HCT116 (cell line): ENCODE measurements at regions of chr10 and their contacts with region 1.

Region 1: GRCh38 chr10:118720685-118721538 is 33.9 kb downstream of the CACUL1 start:
- DNase-seq: peak; percentile 50
- ATAC-seq: peak; percentile 79
- H3K4me3 ChIP-seq: no peak overlapping the region
- H3K27ac ChIP-seq: no peak overlapping the region
- H3K4me1 ChIP-seq: no peaks in the 10 kb centered on the region
- H3K27me3 ChIP-seq: no peaks in the 10 kb centered on the region
- CTCF ChIP-seq: peak; percentile 79 to 98 (median 86)
- POLR2A ChIP-seq: no peak
- RAD21 ChIP-seq: peak; percentile 85

Region 2: GRCh38 chr10:118511711-118512110 is 209.2 kb before region 1 on chr10:
- CTCF ChIA-PET with region 1: no interaction called
- POLR2A ChIA-PET with region 1: no interaction called
- RAD21 ChIA-PET with region 1: no interaction called
- intact Hi-C with region 1: no loop called
- DNase-seq: no peak
- ATAC-seq: no peak
- H3K4me3 ChIP-seq: no peak overlapping the region
- H3K27ac ChIP-seq: no peak overlapping the region
- H3K4me1 ChIP-seq: no peaks in the 10 kb centered on the region
- H3K27me3 ChIP-seq: no peaks in the 10 kb centered on the region
- CTCF ChIP-seq: no peak
- POLR2A ChIP-seq: no peak
- RAD21 ChIP-seq: no peak

Region 3: DNA sequence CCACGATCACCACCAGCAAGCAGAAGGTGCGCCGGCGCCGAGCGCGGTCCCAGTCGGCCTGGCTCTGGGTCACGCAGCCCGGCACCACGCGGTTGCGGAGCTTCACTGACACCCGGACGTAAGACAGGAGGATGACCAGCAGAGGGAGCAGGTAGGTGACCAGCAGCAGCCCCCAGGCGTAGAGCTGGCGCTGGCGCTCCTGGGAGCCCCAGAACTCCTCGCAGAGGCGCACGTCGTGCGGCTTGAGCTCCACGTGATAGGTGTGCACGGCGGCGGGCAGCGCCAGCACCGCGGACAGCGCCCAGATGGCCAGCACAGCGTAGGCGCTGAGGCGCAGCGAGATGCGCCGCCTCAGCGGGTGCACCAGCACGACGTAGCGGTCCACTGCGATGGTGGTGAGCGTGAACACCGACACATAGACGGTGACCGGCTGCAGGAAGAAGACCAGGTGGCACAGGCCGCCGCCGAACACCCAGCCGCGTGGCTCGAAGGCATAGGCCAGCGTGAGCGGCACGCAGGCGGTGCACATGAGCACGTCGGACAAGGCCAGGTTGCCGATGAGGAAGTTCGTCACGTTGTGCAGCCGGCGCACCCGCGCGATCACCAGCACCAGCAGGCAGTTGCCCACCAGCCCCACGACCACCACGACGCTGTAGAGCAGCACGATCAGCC is 126.4 kb before region 1 on chr10:
- CTCF ChIA-PET with region 1: interaction called, 21 read pairs
- POLR2A ChIA-PET with region 1: no interaction called
- RAD21 ChIA-PET with region 1: no interaction called
- intact Hi-C with region 1: loop called (anchors 1 kb)
- DNase-seq: no peak
- ATAC-seq: peak; percentile 81
- H3K4me3 ChIP-seq: no peak overlapping the region
- H3K27ac ChIP-seq: no peak overlapping the region
- H3K4me1 ChIP-seq: no peaks in the 10 kb centered on the region
- H3K27me3 ChIP-seq: peaks cover 56% of the 10 kb centered on the region
- CTCF ChIP-seq: peak; percentile 32 to 60 (median 59); a peak in 5 of 6 replicates
- POLR2A ChIP-seq: no peak
- RAD21 ChIP-seq: peak; percentile 48

Region 4: DNA sequence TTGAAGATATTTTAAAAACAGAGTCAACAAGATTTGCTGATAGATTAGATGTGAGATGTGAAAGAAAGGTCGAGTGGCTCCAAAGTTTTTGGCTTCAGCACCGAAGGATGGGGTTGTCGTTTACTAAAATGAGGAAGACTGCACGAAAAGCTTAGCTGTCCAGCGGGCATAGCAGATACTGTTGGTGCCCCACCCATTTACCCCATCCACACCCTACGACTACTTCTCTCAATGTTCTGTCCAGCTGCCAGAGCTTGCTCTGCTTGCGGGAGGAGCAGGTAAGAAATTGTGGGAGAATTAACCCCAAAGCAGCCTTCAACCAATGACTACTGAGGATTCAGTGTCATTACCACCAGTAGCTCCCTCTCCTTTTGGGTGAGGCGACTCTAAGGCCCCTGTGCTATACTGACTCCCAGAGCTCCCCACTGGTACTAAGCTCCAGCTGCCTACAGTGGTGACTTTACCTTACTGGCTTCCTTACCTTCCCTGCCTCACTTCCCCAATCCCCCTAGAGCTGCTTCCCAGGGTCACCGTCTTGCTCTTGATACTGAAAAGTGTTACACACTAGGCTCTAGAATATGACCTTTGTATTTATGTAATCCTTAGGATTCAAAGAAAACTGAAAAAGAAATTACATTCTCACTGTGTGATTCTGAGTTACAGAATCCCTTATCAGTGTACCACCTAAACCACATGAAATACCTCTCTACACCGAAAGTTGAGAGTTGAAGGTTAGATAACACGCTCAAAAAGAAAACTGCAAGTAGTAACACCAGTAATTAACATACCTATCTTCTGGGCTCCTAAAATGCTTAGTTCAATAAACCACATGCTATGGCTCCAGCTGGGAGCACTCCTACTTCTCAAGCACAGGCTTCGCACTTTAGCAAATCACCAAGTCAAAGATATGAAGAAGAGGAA is 11.6 kb after region 1 on chr10:
- CTCF ChIA-PET with region 1: interaction called, 35 read pairs
- POLR2A ChIA-PET with region 1: no interaction called
- RAD21 ChIA-PET with region 1: no interaction called
- intact Hi-C with region 1: no loop called
- DNase-seq: no peak
- ATAC-seq: no peak
- H3K4me3 ChIP-seq: no peak overlapping the region
- H3K27ac ChIP-seq: no peak overlapping the region
- H3K4me1 ChIP-seq: no peaks in the 10 kb centered on the region
- H3K27me3 ChIP-seq: no peaks in the 10 kb centered on the region
- CTCF ChIP-seq: no peak
- POLR2A ChIP-seq: no peak
- RAD21 ChIP-seq: no peak

Region 5: GRCh38 chr10:118754720-118755480 is 34.0 kb after region 1 on chr10 and contains the start of gene CACUL1:
- CTCF ChIA-PET with region 1: interaction called, 17 read pairs
- POLR2A ChIA-PET with region 1: no interaction called
- RAD21 ChIA-PET with region 1: no interaction called
- intact Hi-C with region 1: no loop called
- DNase-seq: peak; percentile 100
- ATAC-seq: peak; percentile 97
- H3K4me3 ChIP-seq: peak within 1 kb of the TSS; percentile 81 to 94
- H3K27ac ChIP-seq: peak within 1 kb of the TSS; percentile 83
- H3K4me1 ChIP-seq: peaks cover 10 to 21% of the 10 kb centered on the region in 2 experiments
- H3K27me3 ChIP-seq: no peaks in the 10 kb centered on the region
- CTCF ChIP-seq: no peak
- POLR2A ChIP-seq: peak; percentile 91
- RAD21 ChIP-seq: no peak
- total RNA-seq, gene CACUL1: 67.5 TPM

Region 6: GRCh38 chr10:119165171-119166110 is 444.5 kb after region 1 on chr10 and contains the start of gene SFXN4:
- CTCF ChIA-PET with region 1: no interaction called
- POLR2A ChIA-PET with region 1: no interaction called
- RAD21 ChIA-PET with region 1: no interaction called
- intact Hi-C with region 1: no loop called
- DNase-seq: peak; percentile 44
- ATAC-seq: peak; percentile 93
- H3K4me3 ChIP-seq: peak within 1 kb of the TSS; percentile 84 to 88
- H3K27ac ChIP-seq: peak within 1 kb of the TSS; percentile 81
- H3K4me1 ChIP-seq: peaks cover 10 to 24% of the 10 kb centered on the region in 2 experiments
- H3K27me3 ChIP-seq: no peaks in the 10 kb centered on the region
- CTCF ChIP-seq: no peak
- POLR2A ChIP-seq: peak; percentile 55
- RAD21 ChIP-seq: no peak
- total RNA-seq, gene SFXN4: 58.2 TPM